GM12878 (cell line): ENCODE measurements at regions of chr1 and their contacts with region 1.

Region 1: GRCh38 chr1:77031106-77031662 is 163.9 kb downstream of the ST6GALNAC5 start:
- DNase-seq: no peak
- ATAC-seq: peak; percentile 86
- H3K4me3 ChIP-seq: no peak overlapping the region
- H3K27ac ChIP-seq: no peak overlapping the region
- H3K4me1 ChIP-seq: no peaks in the 10 kb centered on the region
- H3K27me3 ChIP-seq: no peaks in the 10 kb centered on the region; a peak in 1 of 4 replicates
- CTCF ChIP-seq: peak in 1 of 3 experiments; percentile 14; a peak in 2 of 6 replicates
- EP300 ChIP-seq: no peak
- POLR2A ChIP-seq: no peak
- RAD21 ChIP-seq: peak; percentile 5; the same call in 1 of the 2 replicates

Region 2: GRCh38 chr1:76868154-76868882 is 162.9 kb before region 1 on chr1:
- CTCF ChIA-PET with region 1: interaction called, 10 read pairs
- POLR2A ChIA-PET with region 1: no interaction called
- RAD21 ChIA-PET with region 1: interaction called, 23 read pairs
- SMC1A ChIA-PET with region 1: interaction called, 10 read pairs
- in situ Hi-C with region 1: no loop called
- intact Hi-C with region 1: no loop called
- DNase-seq: no peak
- ATAC-seq: peak; percentile 82
- H3K4me3 ChIP-seq: no peak overlapping the region
- H3K27ac ChIP-seq: no peak overlapping the region
- H3K4me1 ChIP-seq: peaks cover 11% of the 10 kb centered on the region; the same call in 1 of the 2 replicates
- H3K27me3 ChIP-seq: peaks cover 8 to 22% of the 10 kb centered on the region in 2 experiments
- CTCF ChIP-seq: peak in 2 of 3 experiments; percentile 3 to 14; a peak in 1 of 6 replicates
- EP300 ChIP-seq: no peak
- POLR2A ChIP-seq: no peak
- RAD21 ChIP-seq: 0 out of 2 replicates have a peak, but pooled peaks have one; percentile 15

Region 3: GRCh38 chr1:76901158-76901767 is 129.9 kb before region 1 on chr1:
- CTCF ChIA-PET with region 1: interaction called, 3 read pairs
- POLR2A ChIA-PET with region 1: interaction called, 4 read pairs
- RAD21 ChIA-PET with region 1: interaction called, 6 read pairs
- SMC1A ChIA-PET with region 1: interaction called, 11 read pairs
- in situ Hi-C with region 1: no loop called
- intact Hi-C with region 1: no loop called
- DNase-seq: peak; percentile 9
- ATAC-seq: peak; percentile 99
- H3K4me3 ChIP-seq: no peak overlapping the region
- H3K27ac ChIP-seq: no peak overlapping the region
- H3K4me1 ChIP-seq: no peaks in the 10 kb centered on the region
- H3K27me3 ChIP-seq: no peaks in the 10 kb centered on the region
- CTCF ChIP-seq: peak; percentile 72 to 80 (median 78)
- EP300 ChIP-seq: no peak
- POLR2A ChIP-seq: no peak
- RAD21 ChIP-seq: peak; percentile 71

Region 4: DNA sequence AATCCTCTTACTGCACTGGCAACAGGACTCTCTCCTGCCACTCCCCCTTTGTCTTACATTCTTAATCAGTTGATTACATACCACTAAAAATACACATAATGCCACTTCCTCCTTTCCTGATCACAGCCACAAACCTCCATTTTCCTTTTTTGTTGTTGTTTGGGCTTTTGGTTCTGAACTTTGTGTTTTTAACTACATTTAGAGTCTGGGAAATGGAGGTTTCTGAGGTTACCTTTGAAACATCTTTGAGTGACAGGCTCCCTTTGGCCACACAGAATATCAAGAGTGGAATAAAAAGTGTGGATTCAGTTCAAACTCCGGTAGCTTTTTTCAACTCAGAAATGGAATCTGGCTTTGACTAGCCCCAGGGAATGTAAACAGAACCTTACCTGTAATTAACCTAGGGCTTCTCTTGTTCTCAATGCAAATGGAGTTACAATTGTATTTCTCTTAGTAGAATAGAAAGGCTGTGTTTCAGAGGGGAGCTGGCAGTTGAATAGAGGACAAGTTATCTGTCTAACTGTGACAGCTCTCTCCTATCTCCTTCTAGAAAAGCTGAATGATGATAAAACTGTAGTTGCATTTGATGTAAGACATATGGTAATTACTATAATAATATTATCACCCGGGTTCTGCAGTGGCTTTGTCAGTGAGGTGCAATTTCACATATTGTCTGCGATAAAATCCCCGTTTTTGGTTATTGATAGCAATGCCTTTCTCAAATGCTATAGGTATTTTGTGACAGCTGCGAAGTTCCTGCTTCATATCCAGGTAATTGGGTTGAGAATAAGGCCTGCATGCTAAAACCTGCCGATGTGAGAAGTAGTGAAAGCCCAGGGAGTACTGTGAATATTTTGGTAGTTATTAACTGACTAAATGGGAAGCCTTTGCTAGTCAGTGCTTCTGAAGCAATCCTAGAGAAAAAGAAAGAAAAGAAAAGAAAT is 97.0 kb before region 1 on chr1:
- CTCF ChIA-PET with region 1: interaction called, 45 read pairs
- POLR2A ChIA-PET with region 1: no interaction called
- RAD21 ChIA-PET with region 1: interaction called, 44 read pairs
- SMC1A ChIA-PET with region 1: interaction called, 56 read pairs
- in situ Hi-C with region 1: no loop called
- intact Hi-C with region 1: no loop called
- DNase-seq: no peak
- ATAC-seq: peak; percentile 53
- H3K4me3 ChIP-seq: no peak overlapping the region
- H3K27ac ChIP-seq: no peak overlapping the region
- H3K4me1 ChIP-seq: peaks cover 1% of the 10 kb centered on the region; the same call in 1 of the 2 replicates
- H3K27me3 ChIP-seq: no peaks in the 10 kb centered on the region; a peak in 1 of 4 replicates
- CTCF ChIP-seq: no peak
- EP300 ChIP-seq: no peak
- POLR2A ChIP-seq: no peak
- RAD21 ChIP-seq: no peak

Region 5: GRCh38 chr1:76949503-76949902 is 81.7 kb before region 1 on chr1:
- CTCF ChIA-PET with region 1: interaction called, 41 read pairs
- POLR2A ChIA-PET with region 1: no interaction called
- RAD21 ChIA-PET with region 1: interaction called, 29 read pairs
- SMC1A ChIA-PET with region 1: interaction called, 49 read pairs
- in situ Hi-C with region 1: no loop called
- intact Hi-C with region 1: no loop called
- DNase-seq: no peak
- ATAC-seq: peak; percentile 38
- H3K4me3 ChIP-seq: no peak overlapping the region
- H3K27ac ChIP-seq: no peak overlapping the region
- H3K4me1 ChIP-seq: no peaks in the 10 kb centered on the region
- H3K27me3 ChIP-seq: 0 out of 4 replicates have a peak, but pooled peaks cover 0 to 1% of the 10 kb centered on the region in 2 experiments
- CTCF ChIP-seq: no peak
- EP300 ChIP-seq: no peak
- POLR2A ChIP-seq: no peak
- RAD21 ChIP-seq: no peak

Region 6: GRCh38 chr1:77010937-77011336 is 20.2 kb before region 1 on chr1:
- CTCF ChIA-PET with region 1: interaction called, 22 read pairs
- POLR2A ChIA-PET with region 1: interaction called, 5 read pairs
- RAD21 ChIA-PET with region 1: interaction called, 11 read pairs
- SMC1A ChIA-PET with region 1: interaction called, 50 read pairs
- in situ Hi-C with region 1: no loop called
- intact Hi-C with region 1: no loop called
- DNase-seq: no peak
- ATAC-seq: no peak
- H3K4me3 ChIP-seq: no peak overlapping the region
- H3K27ac ChIP-seq: no peak overlapping the region
- H3K4me1 ChIP-seq: no peaks in the 10 kb centered on the region
- H3K27me3 ChIP-seq: no peaks in the 10 kb centered on the region
- CTCF ChIP-seq: no peak
- EP300 ChIP-seq: no peak
- POLR2A ChIP-seq: no peak
- RAD21 ChIP-seq: no peak

Region 7: GRCh38 chr1:77018761-77019160 is 12.4 kb before region 1 on chr1:
- CTCF ChIA-PET with region 1: interaction called, 13 read pairs
- POLR2A ChIA-PET with region 1: interaction called, 5 read pairs
- RAD21 ChIA-PET with region 1: interaction called, 7 read pairs
- SMC1A ChIA-PET with region 1: interaction called, 17 read pairs
- in situ Hi-C with region 1: no loop called
- intact Hi-C with region 1: no loop called
- DNase-seq: no peak
- ATAC-seq: no peak
- H3K4me3 ChIP-seq: no peak overlapping the region
- H3K27ac ChIP-seq: no peak overlapping the region
- H3K4me1 ChIP-seq: no peaks in the 10 kb centered on the region
- H3K27me3 ChIP-seq: no peaks in the 10 kb centered on the region
- CTCF ChIP-seq: no peak
- EP300 ChIP-seq: no peak
- POLR2A ChIP-seq: no peak
- RAD21 ChIP-seq: no peak